MCF 10A (cell line): ENCODE measurements at regions of chr2 and their contacts with region 1.

Region 1: GRCh38 chr2:74822771-74823566 is 11.0 kb upstream of the HK2 start:
- DNase-seq: no peak
- H3K4me3 Mint-ChIP-seq: no peak overlapping the region
- H3K27ac Mint-ChIP-seq: no peak overlapping the region
- H3K4me1 Mint-ChIP-seq: no peaks in the 10 kb centered on the region
- H3K27me3 Mint-ChIP-seq: no peaks in the 10 kb centered on the region
- CTCF ChIP-seq: no peak

Region 2: GRCh38 chr2:74764429-74765272 is 58.3 kb before region 1 on chr2:
- CTCF ChIA-PET with region 1: no interaction called
- POLR2A ChIA-PET with region 1: no interaction called
- intact Hi-C with region 1: loop called (anchors 10 kb)
- DNase-seq: no peak
- H3K4me3 Mint-ChIP-seq: no peak overlapping the region
- H3K27ac Mint-ChIP-seq: no peak overlapping the region
- H3K4me1 Mint-ChIP-seq: peaks cover 5% of the 10 kb centered on the region
- H3K27me3 Mint-ChIP-seq: no peaks in the 10 kb centered on the region
- CTCF ChIP-seq: no peak

Region 3: DNA sequence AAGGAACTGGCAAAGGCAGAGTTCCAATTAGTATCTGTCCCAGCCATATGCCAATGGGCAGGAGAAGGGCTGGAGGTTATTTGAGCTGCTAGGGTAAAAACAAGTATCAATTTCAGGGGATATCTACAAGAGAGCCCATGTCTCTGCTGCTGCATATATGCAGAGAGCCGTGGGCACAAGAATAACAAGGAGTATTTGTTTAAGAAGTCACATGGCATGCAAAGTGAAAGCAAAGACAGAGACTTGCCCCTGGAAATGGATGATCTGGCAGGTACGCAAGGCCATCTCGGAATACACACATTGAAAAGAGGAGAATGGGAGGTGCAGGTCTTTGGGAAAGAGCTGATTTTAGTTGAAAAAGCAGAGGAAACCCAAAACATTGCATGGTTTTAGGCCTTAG is 567.2 kb after region 1 on chr2:
- CTCF ChIA-PET with region 1: no interaction called
- POLR2A ChIA-PET with region 1: no interaction called
- intact Hi-C with region 1: no loop called
- DNase-seq: no peak
- H3K4me3 Mint-ChIP-seq: no peak overlapping the region
- H3K27ac Mint-ChIP-seq: no peak overlapping the region
- H3K4me1 Mint-ChIP-seq: no peaks in the 10 kb centered on the region
- H3K27me3 Mint-ChIP-seq: peaks cover 38% of the 10 kb centered on the region
- CTCF ChIP-seq: no peak